ENCODE measurements at regions of chr17 and their contacts with region 1.

Region 1: DNA sequence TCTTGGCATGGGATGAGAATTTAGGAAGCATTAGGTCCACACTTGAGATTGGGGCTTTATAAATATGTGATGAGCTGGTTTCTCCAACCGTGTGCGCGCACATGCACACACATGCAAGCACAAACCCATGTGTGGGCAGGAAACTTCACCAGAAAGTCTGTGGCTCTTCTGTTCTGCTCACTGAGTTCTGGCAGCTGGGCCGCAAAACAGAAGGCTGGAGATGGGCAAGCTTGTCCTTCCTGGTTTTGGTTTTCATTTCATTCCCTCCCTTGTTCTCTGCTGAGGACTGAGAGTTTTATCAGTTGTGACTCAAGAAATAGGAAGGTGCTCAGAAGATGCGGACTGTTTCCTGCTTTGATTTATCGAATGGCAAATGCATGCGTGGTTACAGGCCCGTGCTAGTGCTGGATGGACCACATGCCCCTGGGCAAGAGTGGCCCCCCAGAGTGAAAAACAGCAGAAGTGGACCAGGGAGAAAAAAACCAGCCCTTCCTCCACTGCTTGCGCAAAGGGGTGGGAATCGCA is 14.1 kb downstream of the MAP3K14 start:
- DNase-seq: peak in 1 of 2 donors; percentile 47
- ATAC-seq: peak; percentile 67 to 83 (median 68)
- H3K4me3 ChIP-seq: no peak overlapping the region
- H3K4me3 Mint-ChIP-seq: peak overlapping the region; percentile 40
- H3K27ac ChIP-seq: peak overlapping the region; percentile 40
- H3K27ac Mint-ChIP-seq: peak overlapping the region; percentile 83 to 86
- H3K4me1 ChIP-seq: peaks cover 45% of the 10 kb centered on the region
- H3K4me1 Mint-ChIP-seq: peaks cover 43 to 62% of the 10 kb centered on the region in 2 donors
- H3K27me3 ChIP-seq: no peaks in the 10 kb centered on the region
- H3K27me3 Mint-ChIP-seq: no peaks in the 10 kb centered on the region
- CTCF ChIP-seq: no peak

Region 2: DNA sequence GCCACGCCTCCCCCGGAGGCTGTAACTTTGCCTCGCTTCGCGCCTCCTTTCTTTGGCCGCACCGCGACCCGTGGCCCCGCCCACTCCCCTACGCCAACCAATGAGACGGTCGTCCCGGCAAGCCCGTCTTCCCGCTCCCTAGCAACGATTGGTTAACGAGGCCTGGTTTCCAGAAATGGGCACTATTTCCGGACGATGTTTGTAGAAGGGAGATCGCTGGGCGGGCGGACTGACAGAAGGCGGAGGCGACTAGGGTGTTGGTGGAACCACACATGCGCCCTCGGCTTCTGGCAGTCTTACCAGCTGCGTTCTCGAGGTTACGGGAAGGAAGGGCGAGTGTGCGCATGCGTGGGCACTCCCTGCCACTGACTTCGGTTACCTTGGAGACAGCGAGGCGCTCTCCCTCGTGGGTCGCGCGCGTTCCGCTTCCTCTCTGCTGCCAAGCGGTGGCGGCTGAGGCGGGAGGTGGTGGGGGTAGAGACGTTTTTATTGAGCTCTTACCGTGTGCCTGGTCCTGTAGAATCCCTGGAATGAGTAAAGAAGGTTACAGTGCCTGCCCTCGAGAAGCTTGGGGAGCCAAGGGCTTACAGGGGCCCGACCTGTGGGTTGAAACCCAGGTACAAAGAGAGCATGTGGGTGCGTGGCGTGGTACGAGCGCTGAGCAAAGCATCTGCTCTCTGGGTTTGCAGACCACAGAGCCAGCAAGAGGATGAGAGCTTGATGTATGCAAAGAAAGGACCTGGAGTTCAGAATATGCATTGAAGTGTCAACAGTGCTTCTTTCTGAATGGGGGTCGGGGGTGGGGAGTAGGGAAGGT is 14.6 kb after region 1 on chr17:
- intact Hi-C with region 1: loop called (anchors 2 kb)
- DNase-seq: peak; percentile 99 to 100
- ATAC-seq: peak; percentile 76 to 93 (median 81)
- H3K4me3 ChIP-seq: peak overlapping the region; percentile 38
- H3K4me3 Mint-ChIP-seq: peak overlapping the region; percentile 92
- H3K27ac ChIP-seq: peak overlapping the region; percentile 65
- H3K27ac Mint-ChIP-seq: peak overlapping the region; percentile 91 to 92
- H3K4me1 ChIP-seq: peaks cover 64% of the 10 kb centered on the region
- H3K4me1 Mint-ChIP-seq: peaks cover 80 to 81% of the 10 kb centered on the region in 2 donors
- H3K27me3 ChIP-seq: no peaks in the 10 kb centered on the region
- H3K27me3 Mint-ChIP-seq: no peaks in the 10 kb centered on the region
- CTCF ChIP-seq: no peak

Measured in natural killer cell (primary cell).